ENCODE measurements at regions of chr3 and their contacts with region 1.

Region 1: DNA sequence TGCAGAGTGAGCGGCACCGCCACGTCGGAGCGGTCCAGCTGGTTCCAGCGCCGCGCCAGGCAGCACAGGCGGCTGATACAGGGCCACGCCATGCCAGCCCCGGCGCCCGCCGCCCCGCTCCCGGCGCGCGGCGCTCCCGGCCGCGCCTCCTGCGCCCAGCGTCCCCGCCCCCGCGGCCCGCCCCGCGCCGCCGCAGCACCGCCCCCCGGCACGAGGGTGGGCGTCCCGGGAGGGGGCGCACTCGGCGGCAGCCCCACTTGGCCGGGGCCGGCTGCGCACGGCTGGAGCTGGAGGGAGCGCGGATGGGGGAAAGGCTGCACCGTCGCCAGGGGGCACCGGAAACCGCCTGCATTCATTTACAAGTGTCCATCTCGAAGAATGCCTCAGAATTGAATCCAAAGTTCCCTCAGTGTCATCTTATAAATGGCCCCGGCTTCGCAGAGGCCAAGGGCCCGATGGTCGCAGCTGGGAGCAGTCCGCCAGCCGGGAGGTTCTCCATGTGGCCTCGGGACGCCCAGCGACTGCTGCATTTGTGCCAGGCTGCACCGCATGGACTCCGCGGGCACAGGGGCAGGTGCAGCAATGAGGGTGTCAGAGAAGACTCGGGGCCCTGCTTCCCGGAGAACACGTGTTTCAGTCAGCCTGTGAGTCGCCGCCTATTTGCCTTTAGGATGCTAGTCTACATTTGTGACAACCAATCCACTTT is at the start of gene MAP6D1:
- DNase-seq: peak; percentile 54 to 86 (median 74)
- H3K4me3 ChIP-seq: peak within 1 kb of the TSS; percentile 67 to 96 (median 86)
- H3K27ac ChIP-seq: peak within 1 kb of the TSS; percentile 80 to 100 (median 97)
- H3K27me3 ChIP-seq: no peaks in the 10 kb centered on the region
- CTCF ChIP-seq: peak in 53 of 56 donors; percentile 12 to 74 (median 51)
- total RNA-seq, gene MAP6D1: 22.2 to 201 (median 55.1) TPM

Region 2: GRCh38 chr3:183635431-183636220 is 190.0 kb before region 1 on chr3 and contains the start of gene KLHL24:
- intact Hi-C with region 1: loop called in 1 of 2 experiments (anchors 5 kb)
- DNase-seq: peak; percentile 93 to 98 (median 96)
- H3K4me3 ChIP-seq: peak within 1 kb of the TSS; percentile 76 to 100 (median 99)
- H3K27ac ChIP-seq: peak within 1 kb of the TSS; percentile 94 to 100 (median 100)
- H3K27me3 ChIP-seq: no peaks in the 10 kb centered on the region
- CTCF ChIP-seq: peak in 32 of 56 donors; percentile 6 to 52 (median 28)
- total RNA-seq, gene KLHL24: 171 to 344 (median 241) TPM

Region 3: DNA sequence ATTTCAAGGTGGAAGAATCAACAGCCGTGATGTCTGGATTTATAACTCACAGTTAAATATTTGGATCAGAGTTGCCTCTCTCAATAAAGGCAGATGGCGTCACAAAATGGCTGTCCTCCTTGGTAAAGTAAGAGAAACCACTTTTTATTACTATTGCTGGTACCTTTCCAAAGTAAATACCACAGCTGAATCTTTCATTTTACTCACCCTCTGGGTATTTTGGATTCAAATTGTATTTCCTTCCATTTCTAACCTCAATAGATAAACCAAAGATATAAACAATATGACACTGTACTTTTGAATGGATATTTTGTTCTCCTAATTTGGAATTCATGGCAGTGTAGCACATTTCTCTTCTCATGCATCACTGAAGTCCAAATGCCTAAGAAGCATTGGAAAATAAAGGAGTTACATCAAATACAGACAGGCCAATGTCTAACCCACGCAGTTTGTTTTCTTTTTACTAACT is 160.7 kb before region 1 on chr3:
- intact Hi-C with region 1: no loop called
- DNase-seq: no peak
- H3K4me3 ChIP-seq: peak overlapping the region in 6 of 59 donors; percentile 0 to 19 (median 3)
- H3K27ac ChIP-seq: peak overlapping the region in 54 of 59 donors; percentile 6 to 84 (median 61)
- H3K27me3 ChIP-seq: no peaks in the 10 kb centered on the region
- CTCF ChIP-seq: no peak

Region 4: DNA sequence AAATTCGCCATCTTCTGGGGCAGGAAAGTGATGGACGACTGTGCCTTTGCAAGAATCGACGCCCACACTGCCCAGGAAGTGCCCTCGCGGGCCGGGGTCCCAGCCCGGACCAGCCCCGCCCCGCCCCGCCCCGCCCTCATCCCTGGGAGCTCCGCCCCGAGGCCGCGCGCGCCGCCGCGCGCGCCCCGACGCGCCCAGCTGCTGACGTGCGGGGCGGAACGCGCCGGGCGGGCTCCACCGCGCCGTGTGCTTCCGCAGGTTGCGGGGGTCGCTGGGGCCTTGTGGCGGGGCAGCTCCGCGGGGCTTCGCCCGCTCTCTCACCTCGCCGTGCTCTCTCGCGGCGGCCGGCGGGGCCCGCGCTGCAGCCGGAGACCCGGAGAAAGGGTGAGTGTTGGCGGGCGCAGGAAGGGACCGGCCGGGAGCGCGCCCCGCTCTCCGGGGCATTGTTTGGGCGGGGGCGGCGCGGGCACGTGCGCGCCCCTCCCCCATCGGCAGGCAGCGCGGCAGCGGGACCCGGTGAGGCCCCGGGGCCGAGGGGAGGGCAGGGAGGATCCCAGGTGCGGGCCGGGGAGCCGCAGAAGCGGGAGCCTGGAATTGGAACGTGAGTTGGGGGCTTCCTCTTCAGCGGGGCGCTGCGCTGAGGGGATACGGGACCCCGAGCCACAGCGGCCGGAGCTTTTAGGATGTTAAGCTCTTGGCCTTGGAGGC is 127.8 kb before region 1 on chr3 and contains the start of gene YEATS2:
- intact Hi-C with region 1: loop called in 1 of 2 experiments (anchors 5 kb)
- DNase-seq: peak in 9 of 10 donors; percentile 31 to 81 (median 49)
- H3K4me3 ChIP-seq: peak within 1 kb of the TSS; percentile 47 to 99 (median 93)
- H3K27ac ChIP-seq: peak within 1 kb of the TSS; percentile 74 to 98 (median 94)
- H3K27me3 ChIP-seq: no peaks in the 10 kb centered on the region
- CTCF ChIP-seq: peak in 1 of 56 donors; percentile 8
- total RNA-seq, gene YEATS2: 39.9 to 82.1 (median 59.9) TPM

Region 5: GRCh38 chr3:183766745-183767606 is 58.6 kb before region 1 on chr3:
- intact Hi-C with region 1: loop called in 1 of 2 experiments (anchors 2 kb)
- DNase-seq: peak in 9 of 10 donors; percentile 66 to 86 (median 74)
- H3K4me3 ChIP-seq: peak overlapping the region in 1 of 59 donors; percentile 10
- H3K27ac ChIP-seq: peak overlapping the region in 46 of 59 donors; percentile 0 to 80 (median 58)
- H3K27me3 ChIP-seq: no peaks in the 10 kb centered on the region
- CTCF ChIP-seq: peak; percentile 66 to 93 (median 84)

Region 6: GRCh38 chr3:183884427-183885296 is 59.1 kb after region 1 on chr3 and contains the start of gene PARL:
- intact Hi-C with region 1: loop called (anchors 1 to 5 kb)
- DNase-seq: peak; percentile 94 to 97 (median 96)
- H3K4me3 ChIP-seq: peak within 1 kb of the TSS; percentile 57 to 100 (median 94)
- H3K27ac ChIP-seq: peak within 1 kb of the TSS in 58 of 59 donors; percentile 4 to 91 (median 80)
- H3K27me3 ChIP-seq: no peaks in the 10 kb centered on the region
- CTCF ChIP-seq: peak; percentile 93 to 100 (median 98)
- total RNA-seq, gene PARL: 21.2 to 63.1 (median 43.9) TPM

Region 7: DNA sequence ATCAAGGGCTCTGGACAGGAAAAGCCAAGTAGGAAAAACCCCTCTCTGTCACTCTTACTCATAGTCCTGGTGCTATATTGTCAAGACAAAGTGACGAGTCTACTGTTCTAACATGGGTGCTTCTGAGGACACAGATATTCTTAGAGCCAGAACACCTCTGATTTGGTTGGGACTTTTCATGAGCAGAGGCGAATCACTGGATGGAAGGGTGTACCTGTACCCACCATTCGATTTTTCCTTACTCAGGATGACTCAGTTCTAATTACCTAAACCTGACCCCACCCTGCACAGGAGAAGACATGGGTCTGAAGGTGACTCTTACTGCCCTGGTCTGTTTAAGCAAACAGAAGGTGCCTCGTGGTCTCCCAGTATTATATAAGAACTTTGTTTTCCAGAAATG is 133.6 kb after region 1 on chr3:
- intact Hi-C with region 1: no loop called
- DNase-seq: no peak
- H3K4me3 ChIP-seq: no peak overlapping the region
- H3K27ac ChIP-seq: no peak overlapping the region
- H3K27me3 ChIP-seq: no peaks in the 10 kb centered on the region
- CTCF ChIP-seq: no peak

Region 8: GRCh38 chr3:185351371-185351770 is 1525.8 kb after region 1 on chr3:
- intact Hi-C with region 1: no loop called
- DNase-seq: no peak
- H3K4me3 ChIP-seq: no peak overlapping the region
- H3K27ac ChIP-seq: no peak overlapping the region
- H3K27me3 ChIP-seq: no peaks in the 10 kb centered on the region
- CTCF ChIP-seq: no peak

Measured in dorsolateral prefrontal cortex (tissue), 120 donors.